ENCODE measurements at regions of chr20 and their contacts with region 1.

Region 1: GRCh38 chr20:23092384-23092756 is 6.2 kb upstream of the CD93 start:
- DNase-seq: no peak

Region 2: GRCh38 chr20:22794200-22794599 is 298.2 kb before region 1 on chr20:
- intact Hi-C with region 1: no loop called
- DNase-seq: no peak

Region 3: DNA sequence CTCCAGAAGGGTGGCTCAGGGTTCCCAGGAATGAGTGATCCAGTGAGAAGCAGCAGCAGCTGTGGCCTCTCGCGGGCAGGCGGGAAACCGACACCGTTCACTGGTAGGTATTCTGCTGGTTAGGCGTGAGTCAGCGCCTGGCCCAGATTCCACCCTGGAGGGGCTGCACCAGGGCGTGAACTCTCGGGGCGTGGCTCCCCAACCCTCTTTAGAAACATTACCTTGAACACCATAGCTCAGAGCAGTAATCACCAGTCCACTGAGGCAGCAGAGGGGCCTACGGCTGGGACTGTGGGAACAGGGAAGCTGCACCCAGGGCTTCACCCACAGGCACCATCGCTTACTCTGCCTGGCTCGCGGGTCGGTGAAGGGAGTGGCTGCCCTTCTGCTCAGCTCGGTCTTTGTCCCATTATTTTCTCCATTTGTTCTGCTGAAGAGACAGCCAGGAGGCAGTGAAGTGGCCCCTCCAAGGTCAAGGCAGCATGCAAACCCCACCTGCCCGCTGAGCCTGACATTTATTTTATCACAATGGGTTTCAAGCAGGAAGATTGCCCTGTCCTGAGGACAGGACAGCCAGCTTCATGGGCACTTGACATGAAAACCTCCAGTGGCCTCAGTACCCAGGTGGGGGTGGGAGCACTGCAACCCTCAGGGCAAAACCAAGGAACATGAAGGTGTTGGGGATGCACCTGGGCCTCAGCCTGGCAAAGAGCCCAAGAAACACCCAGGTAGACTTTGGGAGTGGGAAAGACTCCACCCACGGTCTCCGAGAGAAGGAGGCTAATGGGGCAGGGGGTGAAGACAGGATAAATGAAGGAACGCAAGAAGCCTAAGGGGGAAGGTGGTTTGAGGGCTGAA is 44.8 kb after region 1 on chr20:
- intact Hi-C with region 1: loop called (anchors 5 to 10 kb)
- DNase-seq: no peak

Measured in posterior vena cava (tissue), 2 donors.